GM23248 (cell line): ENCODE measurements at regions of chr17 and their contacts with region 1.

Region 1: DNA sequence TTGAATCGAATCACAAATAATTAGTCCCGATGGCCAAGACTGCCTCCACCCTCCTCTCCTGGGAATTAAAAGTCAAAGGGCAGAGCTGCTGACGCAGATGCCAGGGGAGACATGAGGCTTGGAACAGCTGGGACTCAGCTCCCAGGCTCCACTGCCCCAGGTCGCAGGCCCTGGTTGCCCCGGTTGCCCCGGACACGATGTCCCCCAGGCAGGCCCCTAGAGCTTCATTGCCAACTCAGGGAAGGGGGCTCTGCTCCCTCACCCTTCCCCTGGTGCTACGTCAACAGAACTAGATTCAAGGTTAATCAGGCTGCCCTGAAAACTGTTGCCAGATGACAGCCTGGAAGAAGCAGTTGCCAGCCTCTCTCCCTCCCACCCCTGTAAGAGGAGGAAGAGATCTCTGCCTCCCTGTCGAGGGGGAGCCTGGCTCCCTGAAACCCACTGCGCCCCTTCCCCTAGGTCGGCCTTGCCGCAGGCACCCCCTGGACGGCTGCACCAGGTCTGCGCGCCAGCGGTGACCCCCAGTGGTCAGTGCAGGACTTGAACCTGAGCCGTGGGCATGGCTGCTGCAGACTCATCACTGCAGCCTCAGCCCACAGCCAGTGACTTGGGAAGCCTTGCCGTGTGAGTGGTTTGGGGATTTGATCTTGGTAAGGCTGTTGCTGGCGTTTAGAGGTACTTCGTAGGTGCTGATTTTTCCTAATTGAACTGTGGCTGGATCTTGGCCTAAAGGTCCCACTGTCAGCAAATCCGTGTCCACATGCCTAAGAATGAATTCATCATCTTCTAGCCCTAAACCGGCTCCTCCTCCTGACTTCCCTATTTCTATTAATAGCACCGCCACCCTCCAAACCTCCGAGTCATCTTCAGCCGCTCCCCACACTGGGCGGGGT is 84.1 kb upstream of the TOB1 start:
- DNase-seq: peak; percentile 98
- H3K4me3 ChIP-seq: peak overlapping the region; percentile 29; the same call in 1 of the 2 replicates
- H3K27ac ChIP-seq: peak overlapping the region; percentile 98
- H3K4me1 ChIP-seq: peaks cover 30% of the 10 kb centered on the region
- H3K27me3 ChIP-seq: no peaks in the 10 kb centered on the region

Region 2: GRCh38 chr17:50507871-50508572 is 442.2 kb before region 1 on chr17 and contains the start of gene MYCBPAP:
- in situ Hi-C with region 1: loop called (anchors 25 kb)
- DNase-seq: peak; percentile 91
- H3K4me3 ChIP-seq: peak within 1 kb of the TSS; percentile 69
- H3K27ac ChIP-seq: peak within 1 kb of the TSS; percentile 40
- H3K4me1 ChIP-seq: no peaks in the 10 kb centered on the region
- H3K27me3 ChIP-seq: no peaks in the 10 kb centered on the region
- total RNA-seq, gene MYCBPAP: 0.32 and 0.89 TPM in 2 replicates

Region 3: DNA sequence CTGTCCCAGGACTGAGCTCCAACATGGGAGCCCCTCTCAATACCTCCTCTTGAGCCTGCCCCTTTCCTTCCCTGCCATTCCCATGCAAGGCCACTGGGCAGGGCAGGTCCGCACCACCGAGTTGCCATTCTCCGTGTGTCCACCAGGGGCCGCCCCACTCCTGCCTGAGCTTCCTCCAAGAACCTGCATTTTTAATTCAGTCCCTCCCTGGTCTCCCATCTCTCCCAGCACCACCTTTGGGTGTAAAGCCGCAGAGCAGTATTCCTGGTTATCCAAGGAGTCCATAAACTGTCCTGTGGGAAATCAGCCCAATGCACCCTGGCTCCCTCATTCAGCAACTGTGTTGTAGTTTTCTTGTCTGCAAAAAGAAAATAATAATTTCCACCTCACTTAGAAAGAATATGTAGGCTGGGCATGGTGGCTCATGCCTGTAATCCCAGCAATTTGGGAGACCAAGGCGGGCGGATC is 167.0 kb before region 1 on chr17:
- in situ Hi-C with region 1: loop called (anchors 10 kb)
- DNase-seq: peak; percentile 85
- H3K4me3 ChIP-seq: no peak overlapping the region
- H3K27ac ChIP-seq: no peak overlapping the region
- H3K4me1 ChIP-seq: no peaks in the 10 kb centered on the region
- H3K27me3 ChIP-seq: no peaks in the 10 kb centered on the region

Region 4: DNA sequence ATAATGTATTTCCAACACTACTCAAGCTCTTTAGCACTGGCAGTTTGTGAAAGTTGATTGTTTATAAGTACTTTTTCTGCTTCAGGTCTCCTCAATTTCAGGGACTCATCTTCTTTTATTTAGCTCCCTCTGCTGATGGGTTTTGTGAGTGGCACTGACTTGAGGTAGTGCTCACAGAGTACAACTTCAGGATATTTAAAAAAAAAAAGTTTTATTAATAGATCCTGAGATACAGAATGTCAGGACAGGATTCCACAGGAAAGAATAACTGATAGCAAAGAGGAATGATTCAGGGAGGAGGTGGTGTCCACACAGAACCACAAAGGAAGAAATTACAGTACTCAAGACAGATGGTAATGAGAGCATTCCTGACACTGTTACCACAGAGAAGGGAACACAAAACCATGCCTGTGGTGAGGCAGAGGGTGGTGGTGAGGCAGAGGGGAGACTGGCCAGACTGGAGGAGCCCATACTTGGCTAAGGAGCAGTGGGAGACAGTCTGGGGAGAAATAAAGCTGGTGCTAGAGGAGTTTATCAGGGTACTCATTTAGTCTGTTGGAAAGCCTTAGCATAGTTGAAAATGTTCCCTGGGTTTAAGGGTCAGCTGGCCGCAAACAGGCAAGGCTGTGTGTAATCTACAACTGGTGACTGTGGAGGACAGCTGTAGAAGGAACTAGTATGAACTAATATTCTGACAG is 106.7 kb after region 1 on chr17:
- in situ Hi-C with region 1: no loop called
- DNase-seq: peak; percentile 92
- H3K4me3 ChIP-seq: peak overlapping the region; percentile 50
- H3K27ac ChIP-seq: peak overlapping the region; percentile 85
- H3K4me1 ChIP-seq: peaks cover 35% of the 10 kb centered on the region
- H3K27me3 ChIP-seq: no peaks in the 10 kb centered on the region